H1 (cell line): ENCODE measurements at regions of chr14 and their contacts with region 1.

Region 1: GRCh38 chr14:21525962-21526671 is at the start of gene SALL2:
- DNase-seq: peak; percentile 93 to 97
- H3K4me3 ChIP-seq: peak within 1 kb of the TSS; percentile 50 to 82 (median 71)
- H3K27ac ChIP-seq: peak within 1 kb of the TSS; percentile 90
- H3K4me1 ChIP-seq: peaks cover 14 to 69% (median 42%) of the 10 kb centered on the region in 4 experiments
- H3K27me3 ChIP-seq: no peaks in the 10 kb centered on the region
- CTCF ChIP-seq: no peak
- EP300 ChIP-seq: peak in 1 of 2 experiments; percentile 87; a peak in 1 of 3 replicates
- POLR2A ChIP-seq: peak; percentile 36 to 85
- RAD21 ChIP-seq: peak in 1 of 2 experiments; percentile 16; a peak in 1 of 4 replicates
- total RNA-seq, gene SALL2: 346 and 360 TPM in 2 replicates

Region 2: GRCh38 chr14:21510735-21511657 is 15.1 kb before region 1 on chr14 and contains the start of gene METTL3:
- CTCF ChIA-PET with region 1: interaction called, 7 read pairs
- POLR2A ChIA-PET with region 1: interaction called, 769 read pairs
- DNase-seq: peak; percentile 83 to 93
- H3K4me3 ChIP-seq: peak within 1 kb of the TSS; percentile 58 to 98 (median 86)
- H3K27ac ChIP-seq: peak within 1 kb of the TSS; percentile 88
- H3K4me1 ChIP-seq: peaks cover 0 to 5% (median 2%) of the 10 kb centered on the region in 4 experiments; a peak in 4 of 7 replicates
- H3K27me3 ChIP-seq: no peaks in the 10 kb centered on the region
- CTCF ChIP-seq: no peak
- EP300 ChIP-seq: no peak
- POLR2A ChIP-seq: peak; percentile 74 to 93
- RAD21 ChIP-seq: 0 out of 4 replicates have a peak, but pooled peaks of 1 of the 2 experiments have one; percentile 4
- total RNA-seq, gene METTL3: 98.6 and 103 TPM in 2 replicates

Region 3: DNA sequence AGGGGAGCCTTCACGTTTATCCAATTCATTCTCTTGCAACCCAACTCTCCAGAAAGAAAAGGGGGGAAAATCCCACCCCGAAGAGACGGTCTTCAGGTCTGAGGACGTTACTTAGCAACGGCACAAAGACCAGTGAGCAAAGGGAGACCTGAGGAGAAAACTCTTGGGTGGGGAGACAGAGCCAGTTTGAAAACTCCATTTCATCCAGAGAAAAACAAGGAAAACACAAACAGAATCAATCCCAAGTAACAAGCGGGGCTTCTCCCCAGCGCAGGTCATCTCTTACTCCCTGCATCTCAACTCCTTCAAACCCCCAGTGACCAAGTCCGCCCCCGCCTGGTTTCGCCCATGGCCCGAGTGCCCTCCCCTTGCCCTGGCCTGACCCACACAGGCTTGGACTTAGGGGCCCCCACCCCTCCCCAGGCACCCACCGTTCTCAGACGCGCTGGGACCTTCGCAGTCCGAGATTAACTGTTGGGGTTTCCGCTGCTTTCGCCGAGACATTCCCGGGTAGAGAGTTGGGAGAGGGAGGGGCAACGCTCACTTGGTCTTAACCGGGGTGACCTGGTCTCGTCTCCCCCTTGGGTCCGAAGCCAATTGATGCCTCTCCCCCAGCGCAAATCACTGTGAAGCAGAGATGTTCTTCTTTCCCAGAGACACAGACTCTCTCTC is 10.4 kb after region 1 on chr14:
- CTCF ChIA-PET with region 1: interaction called, 10 read pairs
- POLR2A ChIA-PET with region 1: interaction called, 769 read pairs
- DNase-seq: peak in 1 of 2 experiments; percentile 76
- H3K4me3 ChIP-seq: peak overlapping the region; percentile 87 to 96 (median 92)
- H3K27ac ChIP-seq: peak overlapping the region; percentile 91
- H3K4me1 ChIP-seq: peaks cover 0 to 20% (median 15%) of the 10 kb centered on the region in 4 experiments
- H3K27me3 ChIP-seq: no peaks in the 10 kb centered on the region
- CTCF ChIP-seq: no peak
- EP300 ChIP-seq: peak in 1 of 2 experiments; percentile 40; a peak in 1 of 3 replicates
- POLR2A ChIP-seq: peak; percentile 63 to 84
- RAD21 ChIP-seq: no peak